ENCODE measurements at regions of chr6 and their contacts with region 1.

Region 1: DNA sequence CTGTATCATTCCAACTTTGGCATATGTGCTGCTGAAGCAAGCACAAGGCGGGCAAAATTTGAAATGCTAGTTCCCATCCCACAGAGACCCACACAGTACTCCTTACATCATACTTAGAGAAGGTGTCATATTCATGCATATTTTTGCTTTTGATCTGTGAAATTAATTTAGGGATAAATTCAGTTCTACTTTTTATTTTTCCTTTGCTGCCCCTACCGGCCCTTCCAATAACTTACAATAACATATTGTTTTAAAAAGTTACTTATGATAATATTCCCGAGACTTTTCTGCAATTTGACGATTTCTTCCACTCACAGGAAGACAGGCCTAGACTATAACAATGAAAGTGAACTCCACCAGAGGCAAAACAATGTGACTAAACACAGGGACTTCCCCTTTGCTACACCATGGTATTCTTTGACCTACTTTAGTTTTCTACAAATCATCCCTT is 35.0 kb downstream of the SESN1 start:
- DNase-seq: peak; percentile 33
- CTCF ChIP-seq: no peak

Region 2: DNA sequence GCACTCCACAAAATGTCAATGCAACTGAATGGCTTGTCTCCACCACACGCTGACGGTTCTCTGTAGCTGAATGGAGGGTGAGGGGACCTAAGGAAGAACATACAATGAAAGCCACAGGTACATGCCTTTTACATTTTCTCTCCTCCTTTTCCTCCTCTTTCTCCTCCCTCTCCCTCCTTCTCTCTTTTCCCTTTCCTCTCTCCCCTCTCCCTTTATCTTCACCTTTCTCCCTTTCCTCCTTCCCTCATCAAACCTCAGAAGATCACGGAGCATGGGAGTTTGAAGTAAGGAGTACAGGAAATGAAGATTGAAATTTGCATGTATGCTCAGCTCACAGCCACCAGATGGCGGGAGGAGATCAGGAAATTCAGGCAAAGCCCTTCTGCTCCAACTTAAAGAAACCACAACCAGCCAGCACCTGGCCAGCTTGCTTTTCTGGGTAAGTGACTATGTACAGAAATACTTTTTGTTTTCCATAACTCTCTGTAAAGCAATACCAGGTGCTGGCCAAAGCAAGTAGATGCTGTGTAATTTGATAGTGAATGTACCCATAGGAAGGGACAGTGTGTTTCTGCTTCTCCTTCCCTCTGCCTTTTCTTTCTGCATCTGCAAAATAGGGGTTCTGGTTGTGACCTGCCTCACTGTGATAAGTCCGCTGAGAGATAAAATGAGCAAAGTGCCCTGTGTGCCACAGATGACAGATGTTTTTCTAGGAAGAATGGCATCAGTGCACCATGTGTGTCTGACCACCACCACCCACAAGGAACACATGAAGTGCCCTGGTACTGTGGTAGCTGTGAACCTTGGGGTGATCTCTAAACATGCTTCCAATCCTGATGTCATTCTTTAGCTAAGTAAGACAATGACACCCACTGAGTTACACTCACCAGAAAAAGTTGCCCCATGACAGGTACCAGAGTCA is 517.5 kb before region 1 on chr6:
- in situ Hi-C with region 1: loop called (anchors 10 kb)
- DNase-seq: peak; percentile 60
- CTCF ChIP-seq: peak; percentile 79

Region 3: GRCh38 chr6:109292420-109292819 is 232.8 kb after region 1 on chr6:
- in situ Hi-C with region 1: no loop called
- DNase-seq: no peak
- CTCF ChIP-seq: no peak